Mammary epithelial cell (primary cell): ENCODE measurements at regions of chr11 and their contacts with region 1.

Region 1: DNA sequence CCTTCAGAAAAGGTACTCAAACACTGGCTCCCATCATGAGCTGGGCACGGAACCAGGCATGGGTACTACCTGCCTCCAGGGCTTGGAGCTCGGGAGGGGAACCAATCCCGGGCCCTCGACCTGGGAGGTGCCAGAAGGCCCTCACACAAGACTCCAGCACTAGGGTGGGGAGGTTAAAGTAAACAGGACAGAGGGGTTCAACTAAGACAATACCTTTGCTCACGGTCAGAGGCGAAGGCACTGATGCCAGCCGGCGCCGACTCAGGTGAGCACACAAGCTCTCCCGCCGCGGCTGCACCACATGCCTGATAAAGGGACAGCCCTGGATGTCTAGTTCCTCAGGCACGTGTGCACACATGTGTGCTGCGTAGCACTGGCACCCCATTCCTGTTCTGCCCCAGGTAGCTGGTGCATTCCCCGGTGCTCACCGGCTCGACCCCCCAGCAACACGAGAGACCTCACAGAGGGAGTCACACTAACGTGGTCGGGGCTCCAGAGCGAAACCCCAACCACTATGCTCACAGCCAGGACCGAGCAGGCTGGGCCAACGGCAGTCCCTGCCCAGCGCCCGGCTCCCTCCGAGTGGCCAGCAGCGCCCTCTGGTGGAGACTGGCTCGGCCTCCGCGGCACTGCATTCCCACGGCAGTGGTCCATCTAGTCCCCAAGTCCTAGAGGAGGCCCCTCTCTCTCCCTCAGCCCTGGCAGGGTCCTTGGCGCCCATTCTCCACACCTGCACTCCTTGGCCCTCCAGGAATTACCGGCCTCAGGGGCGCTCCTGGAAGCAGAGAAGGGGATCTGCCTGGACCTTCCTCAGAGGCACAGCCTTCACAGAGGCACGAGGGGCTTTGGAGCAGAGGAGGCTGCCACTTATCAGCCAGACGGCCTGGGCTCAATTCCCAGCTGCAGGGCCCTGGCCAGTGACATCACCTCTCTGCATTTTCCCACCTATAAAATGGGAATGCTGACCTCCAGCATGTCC is 28.8 kb upstream of the MOB2 start:
- DNase-seq: peak; percentile 30
- H3K4me3 ChIP-seq: no peak overlapping the region
- H3K27ac ChIP-seq: no peak overlapping the region
- H3K4me1 ChIP-seq: peaks cover 4% of the 10 kb centered on the region
- H3K27me3 ChIP-seq: no peaks in the 10 kb centered on the region
- CTCF ChIP-seq: peak; percentile 81 to 92

Region 2: DNA sequence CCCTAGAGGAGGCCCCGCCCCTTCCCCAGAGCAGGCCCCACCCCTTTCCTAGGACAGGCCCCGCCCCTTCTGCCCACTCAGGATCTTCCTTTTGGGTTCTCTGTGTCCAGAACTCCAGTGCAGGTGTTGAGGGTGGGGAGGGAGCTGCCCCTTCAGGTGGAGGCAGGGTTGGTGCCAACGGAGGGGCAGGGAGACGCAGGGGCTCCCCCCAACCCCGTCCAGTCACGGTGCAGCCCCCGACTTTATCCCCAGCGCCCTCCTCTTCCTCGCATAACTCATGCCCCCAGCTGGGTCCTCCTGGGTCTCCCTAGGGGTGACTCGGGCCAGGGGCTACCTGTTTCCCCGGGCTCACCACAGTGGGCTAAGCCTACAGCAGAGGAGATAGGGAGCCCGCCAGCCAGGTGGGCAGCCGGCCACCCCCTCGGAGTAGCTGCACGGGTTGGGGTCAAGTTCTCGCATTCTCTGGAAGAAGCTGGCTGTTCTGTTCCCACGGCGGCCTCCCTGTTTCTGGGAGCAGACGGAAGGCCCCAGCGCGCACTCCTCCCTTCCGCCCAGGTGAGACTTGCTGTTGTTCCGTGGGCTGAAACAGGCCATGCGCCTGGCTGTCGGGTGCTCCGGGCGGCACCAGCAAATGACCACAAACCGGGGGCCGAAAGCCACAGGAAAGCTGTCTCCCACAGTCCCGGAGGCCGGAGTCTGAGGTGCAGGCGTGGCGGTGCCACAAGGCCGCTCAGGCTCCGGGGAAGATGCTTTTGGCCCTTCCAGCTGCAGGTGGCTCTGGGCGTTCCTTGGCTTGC is 401.8 kb before region 1 on chr11:
- CTCF ChIA-PET with region 1: no interaction called
- dilution Hi-C with region 1: no loop called
- in situ Hi-C with region 1: no loop called
- intact Hi-C with region 1: loop called (anchors 10 kb)
- DNase-seq: no peak
- H3K4me3 ChIP-seq: no peak overlapping the region
- H3K27ac ChIP-seq: no peak overlapping the region
- H3K4me1 ChIP-seq: no peaks in the 10 kb centered on the region
- H3K27me3 ChIP-seq: peaks cover under 1% of the 10 kb centered on the region
- CTCF ChIP-seq: no peak

Region 3: DNA sequence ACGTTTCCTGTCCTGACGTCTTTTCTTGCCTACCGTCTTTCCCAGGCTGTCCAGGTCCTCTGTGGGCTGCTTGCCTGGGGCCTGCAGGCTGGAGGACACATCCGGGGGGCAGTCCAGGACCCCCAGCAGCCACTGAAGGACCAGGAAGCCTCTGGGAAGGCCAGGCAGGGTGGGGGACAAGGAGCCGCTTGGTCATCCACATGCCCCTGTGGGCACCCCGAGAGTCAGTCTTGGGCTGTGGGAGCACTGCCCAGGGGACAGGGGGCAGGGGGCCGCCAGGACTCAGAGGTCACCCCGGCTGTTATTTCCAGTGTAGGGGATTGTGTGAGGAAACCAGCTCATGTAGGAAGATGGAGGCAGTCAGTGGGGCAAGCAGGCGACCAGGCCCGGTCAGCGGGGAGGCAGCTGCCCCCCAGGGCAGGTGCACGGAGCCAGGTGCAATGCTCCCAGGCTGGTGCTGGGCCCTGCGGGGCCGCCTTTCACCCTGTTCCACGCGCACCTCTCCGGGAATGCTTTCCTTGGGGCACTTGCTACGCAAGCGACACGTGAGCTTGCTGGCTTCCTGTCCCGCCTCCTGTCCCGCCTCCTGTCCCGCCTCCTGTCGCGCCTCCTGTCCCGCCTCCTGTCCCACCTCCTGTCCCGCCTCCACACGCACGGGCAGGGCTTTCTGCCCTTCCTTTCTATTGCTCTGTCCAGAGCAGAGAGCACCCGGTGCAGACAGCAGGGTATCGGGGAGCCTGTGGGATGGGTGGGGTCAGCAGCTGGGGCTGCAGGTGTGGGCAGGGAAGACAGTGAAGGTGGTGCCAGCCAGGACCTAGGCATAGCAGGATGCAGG is 253.0 kb before region 1 on chr11:
- CTCF ChIA-PET with region 1: no interaction called
- dilution Hi-C with region 1: no loop called
- in situ Hi-C with region 1: no loop called
- intact Hi-C with region 1: loop called (anchors 1 kb)
- DNase-seq: peak; percentile 84
- H3K4me3 ChIP-seq: peak overlapping the region in 2 of 3 experiments; percentile 48 to 56
- H3K27ac ChIP-seq: peak overlapping the region; percentile 9
- H3K4me1 ChIP-seq: peaks cover 18% of the 10 kb centered on the region
- H3K27me3 ChIP-seq: no peaks in the 10 kb centered on the region
- CTCF ChIP-seq: no peak

Region 4: DNA sequence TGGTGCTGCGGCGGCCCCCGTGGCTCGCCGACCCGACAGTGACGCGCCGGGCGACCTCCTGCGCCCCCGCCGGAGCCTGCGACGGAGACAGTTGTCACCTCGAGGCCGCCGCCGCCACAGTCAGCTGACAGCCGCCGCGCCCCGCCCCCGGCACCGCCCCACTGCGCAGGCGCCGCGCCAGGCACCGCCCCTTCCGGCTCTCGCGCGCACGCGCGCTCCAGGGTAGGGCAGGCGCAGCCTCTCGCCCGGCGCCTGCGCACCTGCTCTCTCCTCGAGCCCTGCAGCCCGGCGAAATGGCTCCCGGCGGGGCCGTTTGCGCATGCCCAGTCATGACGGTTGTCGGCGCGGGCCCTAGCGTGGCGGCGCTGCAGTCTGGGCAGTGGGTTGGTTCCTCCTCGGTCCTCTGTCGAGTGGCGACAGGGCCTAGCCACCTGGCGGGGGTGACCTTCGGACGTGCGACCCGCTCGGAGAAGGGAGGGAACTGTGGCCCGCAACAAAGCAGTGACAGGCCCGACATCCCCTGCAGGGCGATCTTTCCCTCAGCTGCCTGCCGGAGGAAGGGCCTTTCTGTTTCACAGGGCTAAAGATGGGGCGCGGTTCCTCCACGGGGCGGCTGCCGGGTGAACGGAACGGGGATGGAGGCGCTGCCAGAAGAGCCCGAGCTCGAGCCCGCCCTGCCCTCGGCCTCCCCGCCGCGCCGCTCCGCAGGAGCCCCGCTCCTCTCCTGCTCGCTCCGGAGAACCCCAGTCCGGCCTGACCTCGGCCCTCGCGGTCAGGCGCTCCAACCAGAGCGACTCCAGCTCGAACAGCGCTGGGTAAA is 205.7 kb before region 1 on chr11 and contains the start of gene TOLLIP:
- CTCF ChIA-PET with region 1: no interaction called
- dilution Hi-C with region 1: no loop called
- in situ Hi-C with region 1: no loop called
- intact Hi-C with region 1: loop called (anchors 5 kb)
- DNase-seq: peak; percentile 84
- H3K4me3 ChIP-seq: peak within 1 kb of the TSS; percentile 58 to 84 (median 72)
- H3K27ac ChIP-seq: peak within 1 kb of the TSS; percentile 61
- H3K4me1 ChIP-seq: peaks cover 35% of the 10 kb centered on the region
- H3K27me3 ChIP-seq: no peaks in the 10 kb centered on the region
- CTCF ChIP-seq: peak in 1 of 2 donors; percentile 27
- total RNA-seq, gene TOLLIP: 49.3 to 78.4 TPM

Region 5: GRCh38 chr11:1458340-1459218 is 56.8 kb before region 1 on chr11:
- CTCF ChIA-PET with region 1: no interaction called
- dilution Hi-C with region 1: no loop called
- in situ Hi-C with region 1: no loop called
- intact Hi-C with region 1: loop called (anchors 2 kb)
- DNase-seq: no peak
- H3K4me3 ChIP-seq: no peak overlapping the region
- H3K27ac ChIP-seq: no peak overlapping the region
- H3K4me1 ChIP-seq: no peaks in the 10 kb centered on the region
- H3K27me3 ChIP-seq: no peaks in the 10 kb centered on the region
- CTCF ChIP-seq: peak in 1 of 2 donors; percentile 30

Region 6: DNA sequence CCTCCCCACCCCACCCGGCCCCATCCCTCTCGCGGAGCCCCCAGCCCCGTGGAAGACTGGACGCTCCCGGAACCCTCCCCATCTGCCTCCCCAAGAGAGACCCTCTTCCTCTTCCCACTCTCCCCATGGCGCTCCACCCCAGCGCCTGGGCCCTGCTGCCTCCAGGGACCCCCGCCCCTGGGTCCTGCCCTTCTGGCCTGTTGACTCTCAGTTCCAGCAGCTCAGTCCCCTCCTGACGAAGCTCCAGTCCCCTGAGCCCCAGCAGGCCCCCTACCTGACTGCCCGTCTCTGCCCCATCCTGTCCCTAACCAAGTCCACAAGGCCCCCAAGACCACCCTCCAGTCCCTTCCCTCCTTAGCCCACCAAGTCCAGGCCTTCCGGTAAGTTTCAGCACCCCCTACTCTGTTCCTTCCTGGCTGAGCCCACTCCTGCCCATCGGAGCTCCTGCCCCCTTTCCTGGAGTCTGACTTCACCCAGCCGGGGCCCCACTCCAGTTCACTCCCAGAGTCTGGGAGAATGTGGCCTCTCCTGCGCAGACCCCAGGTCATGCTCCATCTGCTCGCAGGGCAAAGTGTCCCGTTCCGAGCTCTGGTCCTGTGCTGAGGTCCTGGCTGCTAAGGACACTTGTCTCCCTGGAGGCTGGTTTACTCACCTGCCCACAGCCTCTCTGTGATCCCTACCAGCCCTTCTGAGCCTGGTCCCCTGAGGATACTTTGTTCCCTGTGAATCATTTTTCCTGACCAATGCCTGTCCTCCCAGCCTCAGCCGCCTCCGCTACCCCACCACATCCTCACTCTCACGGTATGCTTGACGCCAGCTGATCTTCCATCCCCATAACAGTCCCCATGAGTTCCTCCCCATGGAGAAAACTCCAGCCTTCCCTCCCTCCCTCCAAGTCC is 234.3 kb after region 1 on chr11:
- CTCF ChIA-PET with region 1: no interaction called
- dilution Hi-C with region 1: no loop called
- in situ Hi-C with region 1: no loop called
- intact Hi-C with region 1: no loop called
- DNase-seq: peak; percentile 92
- H3K4me3 ChIP-seq: peak overlapping the region; percentile 52 to 74 (median 67)
- H3K27ac ChIP-seq: peak overlapping the region; percentile 54
- H3K4me1 ChIP-seq: peaks cover 59% of the 10 kb centered on the region
- H3K27me3 ChIP-seq: no peaks in the 10 kb centered on the region
- CTCF ChIP-seq: no peak